CD14-positive monocyte (primary cell): ENCODE measurements at regions of chr14 and their contacts with region 1.

Region 1: GRCh38 chr14:51846631-51847488 is 13.6 kb upstream of the GNG2 start:
- DNase-seq: peak; percentile 94 to 97 (median 97)
- H3K4me3 ChIP-seq: peak overlapping the region; percentile 43 to 70 (median 62)
- H3K4me3 Mint-ChIP-seq: peak overlapping the region; percentile 76 to 92
- H3K27ac ChIP-seq: peak overlapping the region; percentile 89 to 91
- H3K27ac Mint-ChIP-seq: peak overlapping the region; percentile 98 to 100 (median 99)
- H3K4me1 ChIP-seq: peaks cover 49 to 56% of the 10 kb centered on the region in 2 donors
- H3K4me1 Mint-ChIP-seq: peaks cover 57% of the 10 kb centered on the region
- H3K27me3 ChIP-seq: no peaks in the 10 kb centered on the region
- H3K27me3 Mint-ChIP-seq: peaks cover 0 to 1% (median 0%) of the 10 kb centered on the region in 3 donors
- CTCF ChIP-seq: no peak

Region 2: GRCh38 chr14:51789596-51789995 is 57.3 kb before region 1 on chr14:
- intact Hi-C with region 1: loop called in 1 of 2 experiments (anchors 5 kb)
- DNase-seq: peak; percentile 69 to 88 (median 85)
- H3K4me3 ChIP-seq: peak overlapping the region in 1 of 3 experiments; percentile 21
- H3K4me3 Mint-ChIP-seq: peak overlapping the region in 1 of 2 donors; percentile 56
- H3K27ac ChIP-seq: peak overlapping the region in 1 of 2 donors; percentile 89
- H3K27ac Mint-ChIP-seq: peak overlapping the region; percentile 86 to 92 (median 92)
- H3K4me1 ChIP-seq: peaks cover 17 to 26% of the 10 kb centered on the region in 2 donors
- H3K4me1 Mint-ChIP-seq: peaks cover 18% of the 10 kb centered on the region
- H3K27me3 ChIP-seq: no peaks in the 10 kb centered on the region
- H3K27me3 Mint-ChIP-seq: peaks cover 2 to 18% (median 6%) of the 10 kb centered on the region in 3 donors
- CTCF ChIP-seq: no peak

Region 3: DNA sequence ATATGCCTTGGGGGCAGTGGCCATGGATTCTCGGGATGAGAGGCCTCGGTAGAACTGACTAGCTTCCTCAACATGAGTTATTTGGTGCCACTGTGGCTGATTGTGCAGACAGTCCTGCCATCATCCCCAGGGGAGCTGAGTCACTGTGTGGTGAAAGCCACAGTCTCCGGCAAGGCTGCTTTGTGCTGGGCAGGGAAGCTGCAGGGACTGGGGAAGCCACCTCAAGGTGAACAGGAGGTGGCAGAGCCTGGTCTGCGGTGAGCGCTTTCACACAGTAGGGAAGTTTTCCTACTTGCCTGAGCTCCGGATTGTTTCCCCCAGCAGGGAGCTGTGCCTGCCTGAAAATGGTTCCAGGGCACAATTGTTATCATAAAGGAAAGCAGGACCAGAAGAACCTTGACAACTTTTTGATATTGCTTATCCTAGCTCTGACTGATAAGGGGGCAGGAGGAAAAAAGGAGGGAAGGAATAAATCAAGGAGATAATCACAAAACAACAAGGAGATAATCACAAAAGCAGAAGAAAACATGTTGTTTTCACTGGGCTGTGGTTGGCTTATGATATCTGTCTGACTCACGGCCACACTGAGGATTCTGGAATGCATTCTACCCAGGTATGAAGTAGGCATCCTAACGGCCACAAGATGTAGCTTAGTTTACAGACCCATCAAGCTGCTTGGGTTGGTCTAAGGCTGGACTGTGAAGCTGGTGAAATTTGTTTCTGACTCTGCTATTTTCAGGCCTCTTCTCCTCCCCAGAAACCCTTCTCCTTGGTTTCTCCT is 18.7 kb before region 1 on chr14:
- intact Hi-C with region 1: loop called in 1 of 2 experiments (anchors 2 kb)
- DNase-seq: peak; percentile 76 to 90 (median 87)
- H3K4me3 ChIP-seq: no peak overlapping the region
- H3K4me3 Mint-ChIP-seq: peak overlapping the region in 1 of 2 donors; percentile 35
- H3K27ac ChIP-seq: no peak overlapping the region
- H3K27ac Mint-ChIP-seq: peak overlapping the region in 4 of 7 donors; percentile 57 to 80 (median 65)
- H3K4me1 ChIP-seq: peaks cover 13% of the 10 kb centered on the region in 2 donors
- H3K4me1 Mint-ChIP-seq: no peaks in the 10 kb centered on the region
- H3K27me3 ChIP-seq: peaks cover 0 to 5% of the 10 kb centered on the region in 2 donors
- H3K27me3 Mint-ChIP-seq: peaks cover 0 to 4% (median under 1%) of the 10 kb centered on the region in 3 donors
- CTCF ChIP-seq: no peak

Region 4: GRCh38 chr14:51860164-51860824 is 13.4 kb after region 1 on chr14 and contains the start of gene GNG2:
- intact Hi-C with region 1: loop called in 1 of 2 experiments (anchors 1 kb)
- DNase-seq: peak; percentile 78 to 87 (median 86)
- H3K4me3 ChIP-seq: peak within 1 kb of the TSS; percentile 79 to 95 (median 82)
- H3K4me3 Mint-ChIP-seq: peak within 1 kb of the TSS; percentile 96 to 97
- H3K27ac ChIP-seq: peak within 1 kb of the TSS; percentile 88 to 92
- H3K27ac Mint-ChIP-seq: peak within 1 kb of the TSS; percentile 93 to 97 (median 95)
- H3K4me1 ChIP-seq: peaks cover 56 to 78% of the 10 kb centered on the region in 2 donors
- H3K4me1 Mint-ChIP-seq: peaks cover 82% of the 10 kb centered on the region
- H3K27me3 ChIP-seq: no peaks in the 10 kb centered on the region
- H3K27me3 Mint-ChIP-seq: peaks cover 0 to 2% (median 0%) of the 10 kb centered on the region in 3 donors
- CTCF ChIP-seq: no peak
- polyA plus RNA-seq, gene GNG2: 42.7 to 151 (median 146) TPM

Region 5: DNA sequence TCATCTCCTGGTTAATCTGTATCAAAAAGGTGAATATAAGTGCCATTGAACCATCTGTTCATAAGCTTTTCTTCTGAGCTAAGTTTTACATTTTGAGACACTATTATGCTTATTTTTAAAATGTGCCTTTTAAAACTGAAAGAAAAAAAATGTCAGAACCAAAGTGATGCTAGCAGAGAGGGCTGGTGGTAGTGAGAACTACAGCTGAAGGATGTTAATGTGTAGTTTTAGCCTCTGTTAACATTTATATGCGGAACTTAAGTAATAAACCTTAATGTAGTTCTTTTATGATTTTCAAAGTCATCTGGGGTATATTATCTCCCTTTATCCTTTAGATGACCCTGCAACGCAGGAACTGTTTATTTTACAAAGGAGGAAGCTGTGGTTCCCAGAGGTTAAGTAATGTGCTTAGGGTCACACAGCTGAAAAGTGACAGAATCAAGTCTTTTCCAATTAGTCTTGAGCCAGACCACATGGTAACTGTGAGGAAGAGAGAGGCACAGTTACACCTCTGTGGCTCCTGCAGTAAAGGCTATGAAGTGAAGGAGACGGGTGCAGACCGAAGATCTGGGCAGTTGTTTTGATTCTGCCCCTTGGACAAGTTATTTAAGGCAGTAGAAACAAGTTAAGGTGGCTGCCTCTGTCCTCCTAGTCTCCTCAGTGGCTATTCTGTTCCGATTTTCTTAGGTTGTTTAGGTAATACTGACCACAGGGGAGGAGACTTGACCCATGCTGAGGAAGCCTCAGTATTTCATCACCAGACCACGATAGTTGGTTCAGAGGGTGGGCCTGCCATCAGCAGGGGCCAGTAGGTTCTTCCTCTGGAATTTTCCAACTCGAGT is 37.4 kb after region 1 on chr14:
- intact Hi-C with region 1: loop called (anchors 5 kb)
- DNase-seq: peak; percentile 84 to 87 (median 86)
- H3K4me3 ChIP-seq: peak overlapping the region in 2 of 3 experiments; percentile 41 to 59
- H3K4me3 Mint-ChIP-seq: peak overlapping the region; percentile 56 to 91
- H3K27ac ChIP-seq: peak overlapping the region; percentile 65 to 84
- H3K27ac Mint-ChIP-seq: peak overlapping the region; percentile 94 to 99 (median 98)
- H3K4me1 ChIP-seq: peaks cover 54 to 58% of the 10 kb centered on the region in 2 donors
- H3K4me1 Mint-ChIP-seq: peaks cover 46% of the 10 kb centered on the region
- H3K27me3 ChIP-seq: no peaks in the 10 kb centered on the region
- H3K27me3 Mint-ChIP-seq: no peaks in the 10 kb centered on the region
- CTCF ChIP-seq: no peak

Region 6: DNA sequence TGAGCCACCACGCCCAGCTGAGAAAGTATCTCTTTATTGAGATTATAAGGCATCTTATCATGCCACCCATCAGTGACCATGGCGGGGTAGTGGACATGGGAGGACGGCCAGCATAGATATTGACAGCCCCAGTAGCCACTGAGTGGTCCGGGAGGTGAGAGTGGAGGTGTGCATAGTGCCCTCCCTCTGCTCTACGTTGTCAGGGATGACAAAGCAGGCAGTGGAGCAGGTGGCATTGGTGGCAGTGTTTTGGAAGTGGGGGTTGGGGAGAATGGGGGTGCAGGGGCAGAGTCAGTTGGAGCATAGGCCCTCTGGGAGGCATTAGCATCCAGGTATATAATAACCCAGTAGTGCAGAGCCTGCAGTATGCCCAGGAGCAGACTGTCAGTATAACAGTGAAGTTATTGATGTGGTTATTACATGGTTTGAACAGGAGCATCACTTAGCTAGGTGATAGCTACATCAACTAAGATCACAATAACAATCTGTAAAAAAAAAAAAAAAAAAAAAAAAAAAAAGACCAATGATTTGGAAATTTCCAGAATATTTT is 54.7 kb after region 1 on chr14:
- intact Hi-C with region 1: loop called (anchors 5 to 10 kb)
- DNase-seq: no peak
- H3K4me3 ChIP-seq: no peak overlapping the region
- H3K4me3 Mint-ChIP-seq: no peak overlapping the region
- H3K27ac ChIP-seq: no peak overlapping the region
- H3K27ac Mint-ChIP-seq: peak overlapping the region in 3 of 7 donors; percentile 5 to 22 (median 21)
- H3K4me1 ChIP-seq: peaks cover 6 to 7% of the 10 kb centered on the region in 2 donors
- H3K4me1 Mint-ChIP-seq: peaks cover 21% of the 10 kb centered on the region
- H3K27me3 ChIP-seq: no peaks in the 10 kb centered on the region
- H3K27me3 Mint-ChIP-seq: peaks cover 0 to 4% (median 0%) of the 10 kb centered on the region in 3 donors
- CTCF ChIP-seq: no peak

Region 7: GRCh38 chr14:51908086-51908485 is 61.2 kb after region 1 on chr14:
- intact Hi-C with region 1: loop called (anchors 5 to 10 kb)
- DNase-seq: peak in 1 of 3 donors; percentile 24
- H3K4me3 ChIP-seq: no peak overlapping the region
- H3K4me3 Mint-ChIP-seq: no peak overlapping the region
- H3K27ac ChIP-seq: no peak overlapping the region
- H3K27ac Mint-ChIP-seq: peak overlapping the region in 4 of 7 donors; percentile 2 to 71 (median 48)
- H3K4me1 ChIP-seq: peaks cover 6 to 12% of the 10 kb centered on the region in 2 donors
- H3K4me1 Mint-ChIP-seq: peaks cover 10% of the 10 kb centered on the region
- H3K27me3 ChIP-seq: no peaks in the 10 kb centered on the region
- H3K27me3 Mint-ChIP-seq: peaks cover 0 to under 1% (median 0%) of the 10 kb centered on the region in 3 donors
- CTCF ChIP-seq: no peak